SK-N-SH (cell line): ENCODE measurements at regions of chr10 and their contacts with region 1.

Region 1: GRCh38 chr10:88835096-88835909 is 16.3 kb downstream of the ANKRD22 start:
- DNase-seq: peak; percentile 64
- H3K4me3 ChIP-seq: no peak overlapping the region
- H3K27ac ChIP-seq: no peak overlapping the region
- H3K4me1 ChIP-seq: peaks cover 0 to 2% of the 10 kb centered on the region in 2 experiments; a peak in 1 of 4 replicates
- H3K27me3 ChIP-seq: no peaks in the 10 kb centered on the region
- CTCF ChIP-seq: peak; percentile 94
- EP300 ChIP-seq: no peak
- RAD21 ChIP-seq: peak; percentile 99

Region 2: DNA sequence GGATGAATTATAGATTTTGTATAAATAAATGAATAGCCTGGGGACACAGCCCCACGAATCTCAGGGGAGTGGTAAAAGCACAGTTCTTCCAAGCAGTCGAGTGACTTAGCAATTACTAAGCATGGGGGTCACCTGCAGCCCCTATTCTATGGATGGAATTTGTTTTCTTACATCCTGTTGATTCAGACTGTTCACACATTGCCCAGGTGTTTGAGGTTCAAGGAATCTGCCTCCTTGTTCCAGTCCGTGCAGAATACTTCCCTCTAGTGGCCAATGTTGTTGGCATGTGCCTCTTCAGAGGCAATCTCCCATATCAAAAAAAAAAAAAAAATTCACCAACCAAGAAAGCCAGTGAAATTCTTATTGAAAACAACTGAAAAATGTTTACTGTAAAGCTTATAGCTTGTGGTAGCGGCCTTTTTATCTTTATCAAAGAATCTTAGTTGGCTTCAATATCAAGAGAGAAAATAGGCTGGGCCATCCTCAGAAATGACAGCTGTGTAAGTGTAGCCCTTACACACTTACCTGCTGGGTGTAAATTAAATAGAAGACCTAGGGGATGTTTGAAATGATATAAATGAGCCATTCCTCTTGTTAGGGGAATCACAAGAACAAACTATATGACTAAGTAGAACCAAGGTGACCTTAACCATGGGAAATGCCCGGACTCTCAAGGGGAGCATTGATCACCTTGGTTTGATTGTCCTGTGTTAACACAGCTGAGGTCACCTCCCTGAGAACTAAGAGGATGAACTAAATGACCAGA is 24.9 kb before region 1 on chr10:
- CTCF ChIA-PET with region 1: interaction called, 10 read pairs
- POLR2A ChIA-PET with region 1: no interaction called
- DNase-seq: peak; percentile 36
- H3K4me3 ChIP-seq: no peak overlapping the region; a peak in 1 of 4 replicates
- H3K27ac ChIP-seq: no peak overlapping the region
- H3K4me1 ChIP-seq: peaks cover 0 to 1% of the 10 kb centered on the region in 2 experiments; a peak in 1 of 4 replicates
- H3K27me3 ChIP-seq: no peaks in the 10 kb centered on the region
- CTCF ChIP-seq: peak; percentile 92
- EP300 ChIP-seq: no peak
- RAD21 ChIP-seq: peak; percentile 76

Region 3: GRCh38 chr10:88865281-88865876 is 30.1 kb after region 1 on chr10:
- CTCF ChIA-PET with region 1: interaction called, 11 read pairs
- POLR2A ChIA-PET with region 1: no interaction called
- DNase-seq: no peak
- H3K4me3 ChIP-seq: no peak overlapping the region
- H3K27ac ChIP-seq: no peak overlapping the region
- H3K4me1 ChIP-seq: no peaks in the 10 kb centered on the region; a peak in 1 of 4 replicates
- H3K27me3 ChIP-seq: no peaks in the 10 kb centered on the region
- CTCF ChIP-seq: peak; percentile 37
- EP300 ChIP-seq: no peak
- RAD21 ChIP-seq: peak; percentile 24; the same call in 1 of the 2 replicates

Region 4: DNA sequence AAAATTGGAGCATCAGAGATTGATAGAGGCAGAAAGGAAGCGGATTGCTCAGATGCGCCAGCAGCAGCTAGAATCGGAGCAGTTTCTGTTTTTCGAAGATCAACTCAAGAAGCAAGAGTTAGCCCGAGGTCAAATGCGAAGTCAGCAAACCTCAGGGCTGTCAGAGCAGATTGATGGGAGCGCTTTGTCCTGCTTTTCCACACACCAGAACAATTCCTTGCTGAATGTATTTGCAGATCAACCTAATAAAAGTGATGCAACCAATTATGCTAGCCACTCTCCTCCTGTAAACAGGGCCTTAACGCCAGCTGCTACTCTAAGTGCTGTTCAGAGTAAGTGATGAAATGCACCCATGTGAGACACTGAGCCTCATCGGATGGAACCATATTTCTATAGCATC is 77.8 kb after region 1 on chr10:
- CTCF ChIA-PET with region 1: interaction called, 24 read pairs
- POLR2A ChIA-PET with region 1: no interaction called
- DNase-seq: peak; percentile 38
- H3K4me3 ChIP-seq: no peak overlapping the region
- H3K27ac ChIP-seq: peak overlapping the region; percentile 14 to 93; a peak in 3 of 4 replicates
- H3K4me1 ChIP-seq: peaks cover 10 to 34% of the 10 kb centered on the region in 2 experiments; a peak in 3 of 4 replicates
- H3K27me3 ChIP-seq: no peaks in the 10 kb centered on the region
- CTCF ChIP-seq: no peak
- EP300 ChIP-seq: no peak
- RAD21 ChIP-seq: no peak

Region 5: DNA sequence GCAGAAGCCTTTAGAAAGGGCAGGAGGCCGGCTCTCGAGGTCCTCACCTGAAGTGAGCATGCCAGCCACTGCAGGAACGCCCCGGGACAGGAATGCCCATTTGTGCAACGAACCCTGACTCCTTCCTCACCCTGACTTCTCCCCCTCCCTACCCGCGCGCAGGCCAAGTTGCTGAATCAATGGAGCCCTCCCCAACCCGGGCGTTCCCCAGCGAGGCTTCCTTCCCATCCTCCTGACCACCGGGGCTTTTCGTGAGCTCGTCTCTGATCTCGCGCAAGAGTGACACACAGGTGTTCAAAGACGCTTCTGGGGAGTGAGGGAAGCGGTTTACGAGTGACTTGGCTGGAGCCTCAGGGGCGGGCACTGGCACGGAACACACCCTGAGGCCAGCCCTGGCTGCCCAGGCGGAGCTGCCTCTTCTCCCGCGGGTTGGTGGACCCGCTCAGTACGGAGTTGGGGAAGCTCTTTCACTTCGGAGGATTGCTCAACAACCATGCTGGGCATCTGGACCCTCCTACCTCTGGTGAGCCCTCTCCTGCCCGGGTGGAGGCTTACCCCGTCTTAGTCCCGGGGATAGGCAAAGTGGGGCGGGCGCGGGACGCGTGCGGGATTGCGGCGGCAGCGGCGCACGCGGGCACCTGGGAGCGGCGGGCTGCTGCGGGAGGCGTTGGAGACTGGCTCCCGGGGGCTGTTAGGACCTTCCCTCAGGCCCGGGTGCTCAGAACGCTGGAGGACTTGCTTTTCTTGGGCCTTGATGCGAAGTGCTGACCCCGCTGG is 155.3 kb after region 1 on chr10 and contains the start of gene FAS:
- CTCF ChIA-PET with region 1: interaction called, 31 read pairs
- POLR2A ChIA-PET with region 1: no interaction called
- DNase-seq: peak; percentile 65
- H3K4me3 ChIP-seq: peak within 1 kb of the TSS; percentile 77 to 89
- H3K27ac ChIP-seq: peak within 1 kb of the TSS; percentile 60 to 81
- H3K4me1 ChIP-seq: peaks cover 8 to 28% of the 10 kb centered on the region in 2 experiments; a peak in 3 of 4 replicates
- H3K27me3 ChIP-seq: no peaks in the 10 kb centered on the region
- CTCF ChIP-seq: no peak
- EP300 ChIP-seq: no peak
- RAD21 ChIP-seq: no peak
- polyA plus RNA-seq, gene FAS: 31.5 and 44.2 TPM in 2 replicates

Region 6: DNA sequence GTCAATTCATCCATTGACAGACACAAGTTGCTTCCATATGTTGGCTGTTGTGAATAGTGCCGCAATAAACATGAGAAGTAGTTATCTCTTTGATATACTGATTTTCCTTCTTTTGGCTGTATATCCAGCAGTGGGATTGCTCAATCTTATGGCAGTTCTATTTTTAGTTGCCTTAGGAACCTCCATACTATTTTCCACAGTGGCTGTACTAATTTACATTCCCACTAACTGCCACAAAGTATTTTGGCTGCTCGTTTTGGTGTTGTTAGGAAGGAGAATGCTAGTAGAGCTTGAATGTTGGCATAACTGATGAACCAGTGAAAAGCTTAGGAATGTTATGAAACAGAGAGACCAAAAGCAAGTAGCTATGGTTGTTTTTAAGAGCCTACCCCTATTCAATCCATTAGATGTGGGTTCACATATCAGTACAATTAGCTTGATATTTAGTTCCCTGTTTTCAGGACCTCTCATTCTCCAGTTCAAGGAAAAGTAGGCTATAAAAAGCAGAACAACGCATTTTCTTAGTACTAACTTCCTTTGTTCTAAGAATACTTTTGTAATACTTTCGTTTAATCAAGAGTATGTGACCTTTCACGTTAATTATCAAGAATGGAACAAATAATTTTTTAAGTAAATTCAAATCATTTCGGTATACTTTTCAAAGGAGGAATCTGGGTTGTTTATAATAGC is 255.6 kb after region 1 on chr10:
- CTCF ChIA-PET with region 1: no interaction called
- POLR2A ChIA-PET with region 1: no interaction called
- DNase-seq: no peak
- H3K4me3 ChIP-seq: no peak overlapping the region
- H3K27ac ChIP-seq: no peak overlapping the region
- H3K4me1 ChIP-seq: no peaks in the 10 kb centered on the region; a peak in 1 of 4 replicates
- H3K27me3 ChIP-seq: no peaks in the 10 kb centered on the region
- CTCF ChIP-seq: no peak
- EP300 ChIP-seq: no peak
- RAD21 ChIP-seq: no peak